ENCODE measurements at regions of chr15 and their contacts with region 1.

Region 1: DNA sequence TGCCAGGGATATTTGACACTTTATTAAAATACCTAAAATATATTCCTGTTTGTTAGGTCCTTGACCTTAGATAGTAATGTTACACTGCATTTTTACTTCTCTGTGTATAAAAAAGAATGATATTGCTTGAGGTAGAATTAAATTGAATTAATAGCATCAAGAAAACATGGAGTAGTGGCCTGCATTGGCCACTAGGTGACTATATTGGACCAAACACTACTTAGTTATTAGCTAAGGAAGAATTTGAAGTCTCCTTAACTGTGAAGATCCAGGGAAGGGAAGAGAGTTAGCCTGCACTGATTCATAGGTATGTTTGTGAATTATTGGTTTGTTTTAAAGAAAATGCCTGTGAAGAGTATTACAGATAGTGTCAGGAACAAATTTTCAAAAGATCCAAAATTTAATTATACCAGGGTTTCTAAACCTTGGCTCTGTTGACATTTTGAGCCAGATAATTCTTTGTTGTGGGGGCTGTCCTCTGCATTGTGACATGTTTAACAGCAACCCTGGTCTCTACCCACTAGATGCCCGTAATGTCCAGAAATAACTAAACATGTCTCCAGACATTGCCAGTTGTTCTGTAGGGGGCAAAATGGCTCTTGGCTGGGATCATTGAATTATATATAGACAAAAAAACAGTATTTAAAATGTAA is 103.6 kb upstream of the THSD4 start:
- DNase-seq: peak; percentile 84
- ATAC-seq: peak; percentile 100
- H3K4me3 ChIP-seq: no peak overlapping the region
- H3K27ac ChIP-seq: peak overlapping the region; percentile 42; the same call in 1 of the 2 replicates
- H3K4me1 ChIP-seq: no peaks in the 10 kb centered on the region
- H3K27me3 ChIP-seq: no peaks in the 10 kb centered on the region
- CTCF ChIP-seq: peak; percentile 94
- POLR2A ChIP-seq: 0 out of 2 replicates have a peak, but pooled peaks have one; percentile 25
- RAD21 ChIP-seq: peak; percentile 95

Region 2: DNA sequence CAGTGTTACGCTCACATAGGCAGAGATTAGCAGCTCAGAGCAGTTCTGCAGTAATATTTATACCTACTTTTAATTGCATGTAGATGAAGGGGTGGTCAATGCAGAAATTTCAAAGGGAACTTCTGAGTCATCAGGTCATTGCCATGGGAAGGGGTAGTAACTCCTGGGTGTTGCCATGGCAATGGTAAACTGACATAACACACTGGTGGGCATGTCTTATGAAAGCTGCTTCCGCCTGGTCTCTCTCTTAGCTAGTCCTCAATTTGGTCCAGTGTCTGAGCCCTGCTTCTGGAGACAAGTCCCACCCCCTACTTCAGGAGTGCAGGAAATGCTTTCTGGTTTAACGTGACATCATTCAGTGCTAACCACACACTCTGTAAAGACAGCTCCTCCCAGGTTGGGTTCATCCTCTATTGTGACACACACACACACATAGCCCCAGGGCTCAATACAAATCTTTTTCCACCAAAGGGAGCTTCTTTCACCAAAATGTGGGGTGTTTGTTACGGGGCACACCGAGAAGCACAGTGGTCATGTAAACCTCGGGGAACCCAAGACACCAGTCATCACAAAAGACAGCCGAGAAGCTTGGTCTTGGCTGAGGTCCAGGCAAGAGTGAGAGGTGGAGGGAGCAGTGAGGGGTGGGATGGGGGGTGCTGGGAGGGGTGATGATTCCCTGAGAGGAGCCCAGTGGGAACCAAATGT is 988.4 kb before region 1 on chr15:
- CTCF ChIA-PET with region 1: no interaction called
- POLR2A ChIA-PET with region 1: no interaction called
- dilution Hi-C with region 1: no loop called
- in situ Hi-C with region 1: no loop called
- intact Hi-C with region 1: no loop called
- DNase-seq: peak; percentile 75
- ATAC-seq: peak; percentile 29; the same call in 1 of the 2 replicates
- H3K4me3 ChIP-seq: no peak overlapping the region
- H3K27ac ChIP-seq: no peak overlapping the region
- H3K4me1 ChIP-seq: peaks cover 4% of the 10 kb centered on the region; the same call in 1 of the 2 replicates
- H3K27me3 ChIP-seq: peaks cover 59% of the 10 kb centered on the region
- CTCF ChIP-seq: no peak
- POLR2A ChIP-seq: no peak
- RAD21 ChIP-seq: no peak

Region 3: DNA sequence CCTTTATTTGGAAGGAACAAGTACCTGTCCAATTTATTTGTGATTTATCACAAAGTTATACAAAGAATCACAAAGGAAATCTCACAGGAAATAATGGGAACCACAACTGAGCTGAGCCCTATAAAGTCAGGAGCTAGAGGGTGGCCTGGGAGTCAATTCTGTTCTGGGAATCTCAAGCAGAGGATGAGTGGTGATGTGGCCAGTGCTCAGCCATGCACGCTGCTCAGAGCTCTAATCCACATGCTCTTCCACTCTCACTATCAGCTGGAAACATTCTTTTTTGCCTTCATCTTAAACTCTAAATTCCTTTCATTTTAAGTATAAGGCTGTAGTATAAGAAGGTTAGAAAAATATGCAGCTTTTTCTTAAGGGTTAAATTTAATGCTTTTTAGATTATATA is 284.9 kb before region 1 on chr15:
- CTCF ChIA-PET with region 1: no interaction called
- POLR2A ChIA-PET with region 1: interaction called, 14 read pairs
- dilution Hi-C with region 1: no loop called
- in situ Hi-C with region 1: no loop called
- intact Hi-C with region 1: no loop called
- DNase-seq: peak; percentile 54
- ATAC-seq: peak; percentile 62
- H3K4me3 ChIP-seq: no peak overlapping the region
- H3K27ac ChIP-seq: peak overlapping the region; percentile 43; the same call in 1 of the 2 replicates
- H3K4me1 ChIP-seq: peaks cover 4% of the 10 kb centered on the region
- H3K27me3 ChIP-seq: no peaks in the 10 kb centered on the region
- CTCF ChIP-seq: no peak
- POLR2A ChIP-seq: no peak
- RAD21 ChIP-seq: no peak

Region 4: GRCh38 chr15:70892002-70892914 is 119.4 kb before region 1 on chr15 and contains the starts of genes LRRC49 and THAP10:
- CTCF ChIA-PET with region 1: no interaction called
- POLR2A ChIA-PET with region 1: no interaction called
- dilution Hi-C with region 1: no loop called
- in situ Hi-C with region 1: no loop called
- intact Hi-C with region 1: loop called (anchors 5 kb)
- DNase-seq: peak; percentile 98
- ATAC-seq: peak; percentile 95
- H3K4me3 ChIP-seq: peak within 1 kb of the TSS; percentile 66
- H3K27ac ChIP-seq: peak within 1 kb of the TSS; percentile 64
- H3K4me1 ChIP-seq: peaks cover 6% of the 10 kb centered on the region; the same call in 1 of the 2 replicates
- H3K27me3 ChIP-seq: no peaks in the 10 kb centered on the region
- CTCF ChIP-seq: no peak
- POLR2A ChIP-seq: peak; percentile 52; the same call in 1 of the 2 replicates
- RAD21 ChIP-seq: no peak; the same call in 1 of the 2 replicates
- total RNA-seq, gene LRRC49: 16.8 and 19.2 TPM in 2 replicates
- total RNA-seq, gene THAP10: 2.3 and 3.6 TPM in 2 replicates

Region 5: GRCh38 chr15:70955151-70955550 is 56.5 kb before region 1 on chr15:
- CTCF ChIA-PET with region 1: no interaction called
- POLR2A ChIA-PET with region 1: no interaction called
- dilution Hi-C with region 1: no loop called
- in situ Hi-C with region 1: no loop called
- intact Hi-C with region 1: no loop called
- DNase-seq: peak; percentile 49
- ATAC-seq: no peak
- H3K4me3 ChIP-seq: no peak overlapping the region
- H3K27ac ChIP-seq: no peak overlapping the region
- H3K4me1 ChIP-seq: peaks cover 8% of the 10 kb centered on the region
- H3K27me3 ChIP-seq: no peaks in the 10 kb centered on the region
- CTCF ChIP-seq: no peak
- POLR2A ChIP-seq: no peak
- RAD21 ChIP-seq: no peak

Region 6: DNA sequence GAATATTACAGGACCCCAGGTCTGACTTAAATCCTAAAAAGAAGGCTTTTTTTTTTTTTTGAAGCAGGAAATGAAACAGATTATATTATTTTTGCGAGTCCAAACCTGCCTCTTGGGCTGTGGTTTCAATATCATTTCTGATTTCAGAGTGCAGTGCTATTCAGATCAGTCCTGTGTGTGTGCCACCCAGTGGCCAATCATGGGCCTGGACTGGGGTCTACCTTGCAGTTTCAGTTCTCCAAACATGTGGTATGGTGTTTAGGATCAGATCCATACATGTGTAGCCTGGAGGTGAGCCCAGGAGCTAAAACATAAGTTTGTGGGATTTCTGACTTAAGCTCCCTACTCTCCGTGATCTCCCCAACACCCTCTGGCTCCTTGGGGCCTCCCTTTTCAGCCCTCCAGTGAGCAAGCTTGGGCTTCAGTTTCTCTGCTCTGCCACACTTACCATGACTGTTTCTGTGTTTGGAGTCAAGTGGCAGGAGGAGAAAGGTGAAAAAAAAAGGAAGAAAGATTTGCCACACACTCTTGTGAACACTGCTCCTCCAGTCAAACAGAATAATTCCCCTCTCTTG is 91.6 kb after region 1 on chr15:
- CTCF ChIA-PET with region 1: interaction called, 10 read pairs
- POLR2A ChIA-PET with region 1: no interaction called
- dilution Hi-C with region 1: no loop called
- in situ Hi-C with region 1: no loop called
- intact Hi-C with region 1: loop called (anchors 1 kb)
- DNase-seq: peak; percentile 68
- ATAC-seq: peak; percentile 99
- H3K4me3 ChIP-seq: no peak overlapping the region
- H3K27ac ChIP-seq: no peak overlapping the region
- H3K4me1 ChIP-seq: peaks cover 3% of the 10 kb centered on the region; the same call in 1 of the 2 replicates
- H3K27me3 ChIP-seq: no peaks in the 10 kb centered on the region
- CTCF ChIP-seq: peak; percentile 63
- POLR2A ChIP-seq: no peak
- RAD21 ChIP-seq: peak; percentile 67

Region 7: GRCh38 chr15:71114896-71115554 is 103.4 kb after region 1 on chr15 and contains the start of gene THSD4:
- CTCF ChIA-PET with region 1: no interaction called
- POLR2A ChIA-PET with region 1: no interaction called
- dilution Hi-C with region 1: no loop called
- in situ Hi-C with region 1: loop called (anchors 5 kb)
- intact Hi-C with region 1: no loop called
- DNase-seq: peak; percentile 72
- ATAC-seq: peak; percentile 85
- H3K4me3 ChIP-seq: peak within 1 kb of the TSS; percentile 96
- H3K27ac ChIP-seq: peak within 1 kb of the TSS; percentile 92
- H3K4me1 ChIP-seq: peaks cover 19% of the 10 kb centered on the region
- H3K27me3 ChIP-seq: no peaks in the 10 kb centered on the region
- CTCF ChIP-seq: peak; percentile 85
- POLR2A ChIP-seq: no peak
- RAD21 ChIP-seq: peak; percentile 76
- total RNA-seq, gene THSD4: 25.5 and 31.1 TPM in 2 replicates

Region 8: DNA sequence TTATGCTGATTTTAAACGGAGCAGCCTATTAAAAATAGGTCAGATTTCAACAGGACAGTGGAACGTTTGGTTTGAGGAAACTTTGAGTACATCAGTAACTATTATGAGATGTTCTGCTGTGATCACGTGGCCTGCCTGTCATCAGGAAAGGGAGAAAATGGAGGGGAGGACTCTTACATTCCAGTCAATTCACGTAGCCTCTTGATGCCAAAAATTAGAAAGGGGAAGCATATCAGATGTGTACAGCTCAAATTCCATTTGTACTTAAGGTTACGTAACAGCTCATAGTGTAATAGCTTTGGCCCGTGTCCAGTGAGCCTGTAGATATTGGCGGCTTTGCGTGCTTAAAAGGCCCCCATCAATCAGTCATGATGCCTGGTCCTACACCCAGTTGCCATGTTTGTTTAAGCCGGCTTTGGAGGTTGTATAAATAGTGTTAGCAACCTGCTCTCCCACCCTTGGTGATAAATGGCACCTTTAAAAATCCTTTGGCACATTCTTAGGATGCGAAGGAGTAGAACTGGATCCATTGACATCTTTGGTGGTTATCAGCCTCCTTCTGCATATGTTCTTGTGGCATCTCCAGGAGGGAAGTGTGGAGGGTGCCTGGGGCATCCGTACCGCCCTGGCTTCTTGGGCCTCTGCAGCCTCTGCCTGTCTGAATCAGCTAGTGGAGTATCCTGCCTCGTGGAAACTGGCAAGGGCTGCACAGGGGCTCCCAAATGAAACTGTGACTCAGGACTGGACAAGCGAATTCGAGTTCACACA is 267.5 kb after region 1 on chr15:
- CTCF ChIA-PET with region 1: no interaction called
- POLR2A ChIA-PET with region 1: no interaction called
- dilution Hi-C with region 1: no loop called
- in situ Hi-C with region 1: no loop called
- intact Hi-C with region 1: loop called (anchors 10 kb)
- DNase-seq: peak; percentile 97
- ATAC-seq: peak; percentile 58
- H3K4me3 ChIP-seq: no peak overlapping the region
- H3K27ac ChIP-seq: peak overlapping the region; percentile 68
- H3K4me1 ChIP-seq: peaks cover 47% of the 10 kb centered on the region
- H3K27me3 ChIP-seq: no peaks in the 10 kb centered on the region
- CTCF ChIP-seq: no peak
- POLR2A ChIP-seq: no peak
- RAD21 ChIP-seq: no peak

Measured in IMR-90 (cell line).